Caco-2 (cell line): ENCODE measurements at regions of chr6 and their contacts with region 1.

Region 1: GRCh38 chr6:106512048-106512967 is 117.0 kb downstream of the RTN4IP1 start:
- DNase-seq: peak; percentile 53 to 68
- H3K4me3 ChIP-seq: peak overlapping the region; percentile 78
- H3K4me3 Mint-ChIP-seq: peak overlapping the region; percentile 91
- H3K27ac Mint-ChIP-seq: peak overlapping the region; percentile 66
- H3K4me1 ChIP-seq: peaks cover 6% of the 10 kb centered on the region; the same call in 1 of the 2 replicates
- H3K4me1 Mint-ChIP-seq: peaks cover 12% of the 10 kb centered on the region
- H3K27me3 ChIP-seq: no peaks in the 10 kb centered on the region; the same call in none of the 2 replicates
- H3K27me3 Mint-ChIP-seq: peaks cover 5% of the 10 kb centered on the region
- CTCF ChIP-seq: peak in 1 of 2 experiments; percentile 42

Region 2: DNA sequence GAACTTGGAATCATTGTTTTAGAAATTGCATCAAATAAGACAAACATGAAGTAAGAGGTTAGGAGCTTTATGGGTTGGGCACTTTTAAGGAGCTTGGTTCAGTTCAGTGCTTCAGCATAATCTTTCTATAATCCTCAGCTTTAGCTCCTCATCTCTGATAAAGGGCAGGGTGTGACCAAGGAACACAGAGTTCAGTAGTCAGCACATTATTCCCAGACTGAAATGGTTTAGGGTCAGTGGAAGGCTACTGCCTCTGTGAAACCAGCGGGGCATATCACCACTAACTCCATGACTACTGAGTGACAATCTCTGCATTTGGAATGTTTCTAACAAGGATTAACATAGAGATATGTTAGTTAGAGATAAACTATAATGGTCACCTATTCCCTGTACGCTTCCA is 114.9 kb before region 1 on chr6:
- CTCF ChIA-PET with region 1: no interaction called
- POLR2A ChIA-PET with region 1: no interaction called
- intact Hi-C with region 1: no loop called
- DNase-seq: no peak
- H3K4me3 ChIP-seq: no peak overlapping the region
- H3K4me3 Mint-ChIP-seq: no peak overlapping the region
- H3K27ac Mint-ChIP-seq: no peak overlapping the region
- H3K4me1 ChIP-seq: no peaks in the 10 kb centered on the region
- H3K4me1 Mint-ChIP-seq: no peaks in the 10 kb centered on the region
- H3K27me3 ChIP-seq: no peaks in the 10 kb centered on the region
- H3K27me3 Mint-ChIP-seq: peaks cover 2% of the 10 kb centered on the region
- CTCF ChIP-seq: no peak

Region 3: GRCh38 chr6:106547601-106548453 is 35.5 kb after region 1 on chr6:
- CTCF ChIA-PET with region 1: no interaction called
- POLR2A ChIA-PET with region 1: no interaction called
- intact Hi-C with region 1: loop called (anchors 2 kb)
- DNase-seq: peak; percentile 69 to 77
- H3K4me3 ChIP-seq: no peak overlapping the region
- H3K4me3 Mint-ChIP-seq: peak overlapping the region; percentile 58
- H3K27ac Mint-ChIP-seq: peak overlapping the region; percentile 69
- H3K4me1 ChIP-seq: peaks cover 30% of the 10 kb centered on the region
- H3K4me1 Mint-ChIP-seq: peaks cover 22% of the 10 kb centered on the region
- H3K27me3 ChIP-seq: no peaks in the 10 kb centered on the region
- H3K27me3 Mint-ChIP-seq: no peaks in the 10 kb centered on the region
- CTCF ChIP-seq: no peak

Region 4: GRCh38 chr6:106556368-106556960 is 44.2 kb after region 1 on chr6:
- CTCF ChIA-PET with region 1: no interaction called
- POLR2A ChIA-PET with region 1: no interaction called
- intact Hi-C with region 1: loop called (anchors 2 kb)
- DNase-seq: peak in 1 of 2 experiments; percentile 13
- H3K4me3 ChIP-seq: no peak overlapping the region
- H3K4me3 Mint-ChIP-seq: no peak overlapping the region
- H3K27ac Mint-ChIP-seq: no peak overlapping the region
- H3K4me1 ChIP-seq: no peaks in the 10 kb centered on the region
- H3K4me1 Mint-ChIP-seq: no peaks in the 10 kb centered on the region
- H3K27me3 ChIP-seq: no peaks in the 10 kb centered on the region
- H3K27me3 Mint-ChIP-seq: no peaks in the 10 kb centered on the region
- CTCF ChIP-seq: peak; percentile 25 to 38

Region 5: DNA sequence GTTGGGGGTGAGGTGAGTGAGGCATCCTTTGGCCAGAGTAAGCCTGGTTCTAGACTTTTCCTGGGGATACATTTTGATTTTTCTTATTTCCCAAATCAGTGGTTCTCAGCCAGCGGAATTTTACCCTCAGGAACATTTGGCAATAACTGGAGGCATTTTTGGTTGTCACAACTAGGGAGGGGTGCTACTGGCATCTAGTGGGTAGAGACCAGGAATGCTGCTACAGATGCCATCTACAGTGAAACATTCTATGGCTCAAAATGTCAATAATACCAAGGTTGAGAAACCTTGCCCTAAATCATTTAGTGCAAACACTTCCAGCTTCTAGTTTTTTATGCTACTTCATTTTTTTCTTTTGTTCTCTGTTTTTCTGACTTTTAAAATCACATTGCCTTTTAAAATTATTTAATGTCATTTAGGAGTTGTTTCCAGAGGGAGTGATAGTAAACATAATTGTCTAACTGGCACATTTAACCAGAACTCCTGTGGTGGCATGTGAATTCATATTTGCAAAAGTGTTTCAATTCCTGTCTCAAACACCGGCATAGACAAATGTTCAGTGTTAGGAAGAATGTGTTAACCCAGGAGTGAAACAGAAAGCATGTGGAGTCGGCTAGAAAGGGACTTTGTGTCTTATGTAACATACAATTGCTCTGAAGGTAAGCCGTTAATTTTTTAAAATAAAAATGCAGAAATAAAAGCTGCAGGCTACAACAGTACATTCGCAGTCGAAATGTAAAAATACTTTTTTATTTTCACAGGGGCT is 176.1 kb after region 1 on chr6:
- CTCF ChIA-PET with region 1: no interaction called
- POLR2A ChIA-PET with region 1: no interaction called
- intact Hi-C with region 1: no loop called
- DNase-seq: no peak
- H3K4me3 ChIP-seq: no peak overlapping the region
- H3K4me3 Mint-ChIP-seq: no peak overlapping the region
- H3K27ac Mint-ChIP-seq: no peak overlapping the region
- H3K4me1 ChIP-seq: no peaks in the 10 kb centered on the region
- H3K4me1 Mint-ChIP-seq: no peaks in the 10 kb centered on the region
- H3K27me3 ChIP-seq: no peaks in the 10 kb centered on the region
- H3K27me3 Mint-ChIP-seq: no peaks in the 10 kb centered on the region
- CTCF ChIP-seq: peak in 1 of 2 experiments; percentile 13